Psoas muscle (tissue), 8 donors: ENCODE measurements at regions of chr13 and their contacts with region 1.

Region 1: DNA sequence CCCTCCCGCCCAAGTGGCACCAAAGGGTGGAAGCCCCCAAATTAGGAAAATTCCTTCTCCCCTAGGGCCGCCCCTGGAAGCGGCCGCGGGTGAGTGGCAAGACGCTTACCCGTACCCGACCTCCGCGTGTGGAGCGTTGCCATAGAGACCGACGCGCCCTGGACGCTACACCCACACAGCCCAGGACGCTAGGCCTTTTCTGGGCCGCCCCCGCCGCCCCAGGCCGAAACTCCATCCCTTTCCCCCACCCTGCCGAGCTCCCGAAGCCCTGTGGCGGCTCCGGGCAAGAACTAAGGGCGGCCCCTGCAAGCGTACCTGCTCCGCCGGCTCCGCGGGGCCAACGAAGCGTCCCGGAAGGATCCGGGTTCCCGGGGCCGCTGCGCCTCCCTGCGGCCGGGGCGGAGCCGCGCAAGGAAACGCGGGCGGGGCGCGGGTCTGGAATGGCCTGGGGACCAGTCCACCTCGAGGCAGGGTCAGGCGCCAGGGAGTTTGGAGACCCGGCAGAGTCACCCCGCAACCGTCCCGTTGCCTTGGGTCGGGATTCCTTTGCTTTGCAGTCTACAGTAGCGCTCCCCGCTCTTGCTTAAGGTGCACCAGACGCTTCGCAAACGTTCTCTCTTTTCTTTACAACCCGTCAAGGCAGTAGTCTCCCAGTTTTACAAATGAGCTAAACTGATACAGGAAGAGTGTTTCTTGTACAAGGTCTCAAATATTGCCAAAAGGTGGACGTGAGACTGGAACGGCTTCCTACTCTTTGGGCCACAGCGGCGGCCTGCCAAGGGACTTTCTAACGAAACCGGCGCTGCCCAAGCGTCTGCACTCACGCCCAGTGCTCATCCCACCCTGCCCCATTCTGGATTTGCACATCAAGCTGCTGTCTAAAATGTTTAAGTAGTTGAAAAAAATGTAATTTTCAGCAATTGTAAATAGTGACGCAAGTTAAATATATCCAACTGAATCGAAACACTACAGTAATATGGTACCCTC is at the start of gene NEK5:
- DNase-seq: peak; percentile 59 to 75
- ATAC-seq: peak; percentile 87 to 94 (median 90)
- H3K4me3 ChIP-seq: peak within 1 kb of the TSS; percentile 83
- H3K27ac ChIP-seq: no peak within 1 kb of the TSS
- H3K4me1 ChIP-seq: no peaks in the 10 kb centered on the region
- H3K27me3 ChIP-seq: no peaks in the 10 kb centered on the region
- CTCF ChIP-seq: peak; percentile 70
- total RNA-seq, gene NEK5: 0.48 TPM in 1 of 4 donors, not detected in the others

Region 2: GRCh38 chr13:51814825-51815650 is 314.0 kb before region 1 on chr13:
- intact Hi-C with region 1: loop called (anchors 2 kb)
- DNase-seq: peak; percentile 29 to 68
- ATAC-seq: peak; percentile 55 to 78 (median 70)
- H3K4me3 ChIP-seq: peak overlapping the region; percentile 22
- H3K27ac ChIP-seq: no peak overlapping the region
- H3K4me1 ChIP-seq: peaks cover 14% of the 10 kb centered on the region
- H3K27me3 ChIP-seq: no peaks in the 10 kb centered on the region
- CTCF ChIP-seq: peak; percentile 74

Region 3: GRCh38 chr13:51844862-51845573 is 284.0 kb before region 1 on chr13 and contains the start of gene TMEM272:
- intact Hi-C with region 1: loop called in 1 of 2 experiments (anchors 5 kb)
- DNase-seq: peak; percentile 40 to 70
- ATAC-seq: peak; percentile 68 to 89 (median 78)
- H3K4me3 ChIP-seq: peak within 1 kb of the TSS; percentile 46
- H3K27ac ChIP-seq: no peak within 1 kb of the TSS
- H3K4me1 ChIP-seq: no peaks in the 10 kb centered on the region
- H3K27me3 ChIP-seq: no peaks in the 10 kb centered on the region
- CTCF ChIP-seq: peak; percentile 79
- total RNA-seq, gene TMEM272: 0.30 to 0.49 (median 0.30) TPM in 3 of 4 donors, not detected in the other

Region 4: GRCh38 chr13:51895906-51896888 is 232.8 kb before region 1 on chr13:
- intact Hi-C with region 1: loop called (anchors 1 to 2 kb)
- DNase-seq: peak in 1 of 2 donors; percentile 60
- ATAC-seq: peak; percentile 62 to 79 (median 74)
- H3K4me3 ChIP-seq: no peak overlapping the region
- H3K27ac ChIP-seq: no peak overlapping the region
- H3K4me1 ChIP-seq: no peaks in the 10 kb centered on the region
- H3K27me3 ChIP-seq: no peaks in the 10 kb centered on the region
- CTCF ChIP-seq: peak; percentile 58

Region 5: DNA sequence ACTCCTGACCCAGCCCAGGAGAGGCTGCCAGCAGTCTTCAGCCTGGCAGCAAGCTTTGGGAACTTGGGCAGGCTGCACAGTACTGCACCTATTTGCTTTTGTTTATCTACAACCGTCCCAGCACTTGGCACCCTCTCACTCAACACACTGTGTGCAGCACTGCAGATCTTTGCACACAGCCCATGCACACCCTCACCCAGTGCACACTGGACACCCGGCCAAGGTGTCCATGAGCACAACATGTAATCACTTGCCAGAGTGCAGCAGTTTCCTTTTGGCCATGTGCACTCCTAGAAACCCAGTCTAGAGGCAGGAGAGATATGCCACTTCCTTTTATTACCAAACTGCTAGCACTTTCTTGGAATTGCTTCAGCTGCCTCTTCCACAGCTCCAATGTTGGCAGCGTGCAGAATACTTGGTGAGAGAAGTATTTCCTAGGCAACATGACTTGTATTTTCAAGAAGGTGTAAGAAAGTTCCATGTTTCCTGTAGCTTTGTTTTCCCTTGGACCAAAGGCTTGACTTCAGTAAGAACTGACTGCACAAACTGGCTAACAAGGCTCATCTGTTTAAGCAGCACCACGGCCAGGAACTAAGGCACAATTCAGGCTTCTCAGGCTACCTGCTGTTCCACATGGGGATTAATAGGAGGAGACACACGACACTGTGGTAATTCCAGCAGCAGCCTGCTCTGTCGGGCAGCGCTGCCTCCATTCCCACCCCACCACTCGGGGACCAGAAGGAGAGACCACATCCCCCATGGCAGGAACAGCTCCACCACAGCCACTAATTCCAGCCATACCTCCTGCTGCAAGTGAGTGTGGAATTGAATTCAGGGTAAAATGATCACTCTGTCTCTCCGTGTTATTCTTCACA is 133.1 kb before region 1 on chr13:
- intact Hi-C with region 1: loop called (anchors 2 to 5 kb)
- DNase-seq: no peak
- ATAC-seq: peak; percentile 43 to 66 (median 58)
- H3K4me3 ChIP-seq: no peak overlapping the region
- H3K27ac ChIP-seq: peak overlapping the region; percentile 13
- H3K4me1 ChIP-seq: peaks cover 28% of the 10 kb centered on the region
- H3K27me3 ChIP-seq: no peaks in the 10 kb centered on the region
- CTCF ChIP-seq: peak; percentile 7

Region 6: GRCh38 chr13:52001120-52001731 is 127.8 kb before region 1 on chr13:
- intact Hi-C with region 1: loop called (anchors 2 to 5 kb)
- DNase-seq: no peak
- ATAC-seq: peak in 2 of 4 donors; percentile 37 to 62
- H3K4me3 ChIP-seq: no peak overlapping the region
- H3K27ac ChIP-seq: no peak overlapping the region
- H3K4me1 ChIP-seq: peaks cover 16% of the 10 kb centered on the region
- H3K27me3 ChIP-seq: no peaks in the 10 kb centered on the region
- CTCF ChIP-seq: peak; percentile 65